Psoas muscle (tissue), 8 donors: ENCODE measurements at regions of chr11 and their contacts with region 1.

Region 1: DNA sequence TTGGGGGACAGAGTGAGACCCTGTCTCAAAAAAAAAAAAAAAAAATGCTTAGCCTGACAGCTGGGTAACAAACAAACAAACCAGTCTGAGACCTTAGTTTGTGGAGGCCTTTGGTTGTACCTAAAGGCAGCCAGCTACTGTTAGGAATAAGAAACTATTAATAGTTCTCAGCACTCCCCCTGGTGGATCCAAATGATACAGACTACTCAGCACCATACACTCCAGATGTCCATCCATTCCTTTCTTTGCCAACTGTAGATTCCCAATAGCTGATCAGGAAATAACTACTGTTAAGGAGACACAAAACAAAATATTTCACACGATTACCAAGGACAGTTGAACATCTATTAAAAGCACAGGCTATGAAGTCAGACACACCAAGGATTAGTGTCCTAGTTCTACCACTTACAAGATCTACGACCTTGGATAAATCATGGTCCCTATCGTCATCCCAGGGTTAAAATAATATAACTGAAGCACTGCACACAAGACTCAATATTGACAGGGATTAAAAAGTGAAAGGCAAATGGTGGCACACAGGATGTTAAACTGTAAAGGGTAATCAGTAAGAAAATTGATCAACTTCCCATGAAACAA is 17.2 kb downstream of the CLDN25 start:
- DNase-seq: no peak
- ATAC-seq: peak; percentile 87 to 97 (median 94)
- H3K4me3 ChIP-seq: no peak overlapping the region
- H3K27ac ChIP-seq: peak overlapping the region; percentile 65
- H3K4me1 ChIP-seq: no peaks in the 10 kb centered on the region
- H3K27me3 ChIP-seq: no peaks in the 10 kb centered on the region
- CTCF ChIP-seq: peak; percentile 74

Region 2: DNA sequence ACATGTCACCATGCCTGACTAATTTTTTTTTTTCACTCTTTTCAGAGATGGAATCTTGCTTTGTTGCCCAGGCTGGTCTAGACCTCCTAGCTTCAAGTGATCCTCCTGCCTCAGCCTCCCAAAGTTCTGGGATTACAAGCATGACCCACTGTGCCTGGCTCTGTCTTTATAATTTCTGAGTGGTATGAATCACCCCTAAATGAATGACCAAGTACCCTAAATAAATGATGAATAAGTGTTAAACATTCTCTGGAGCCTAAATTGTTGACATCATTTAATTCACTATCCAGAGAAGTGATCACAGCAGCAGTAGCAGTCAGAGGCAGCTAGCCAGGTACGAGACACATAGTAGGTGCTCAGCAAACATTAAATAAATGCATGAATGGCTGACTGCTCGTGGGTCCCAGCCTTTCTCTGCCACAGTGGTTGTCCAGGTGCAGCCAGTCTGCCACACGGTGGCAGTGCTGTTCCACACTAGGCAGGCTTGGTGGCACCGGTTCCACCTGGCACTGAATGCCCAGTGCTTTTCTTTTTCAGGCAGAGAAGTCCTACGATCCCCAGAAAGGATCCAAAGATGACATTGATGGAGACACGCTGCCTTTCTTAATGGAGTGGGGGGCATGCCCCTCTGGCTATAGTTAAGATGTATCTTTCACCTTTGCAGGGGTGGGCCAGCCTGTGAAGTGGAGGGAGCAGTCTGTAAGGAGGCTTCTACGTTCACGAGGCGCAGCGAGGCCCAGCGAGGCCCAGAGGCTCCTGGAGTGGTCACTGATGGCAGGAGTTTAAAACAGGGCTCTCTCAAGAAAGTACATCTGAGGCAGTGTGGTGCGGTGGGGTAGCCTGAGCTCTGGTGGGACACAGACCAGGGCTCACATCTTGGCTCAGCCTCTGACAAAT is 491.1 kb before region 1 on chr11:
- intact Hi-C with region 1: loop called (anchors 10 kb)
- DNase-seq: peak; percentile 76 to 87
- ATAC-seq: peak; percentile 92 to 99 (median 94)
- H3K4me3 ChIP-seq: no peak overlapping the region
- H3K27ac ChIP-seq: no peak overlapping the region
- H3K4me1 ChIP-seq: no peaks in the 10 kb centered on the region
- H3K27me3 ChIP-seq: no peaks in the 10 kb centered on the region
- CTCF ChIP-seq: peak; percentile 95

Region 3: GRCh38 chr11:113314389-113315301 is 482.1 kb before region 1 on chr11 and contains the start of gene TTC12:
- intact Hi-C with region 1: loop called (anchors 10 kb)
- DNase-seq: peak; percentile 94 to 98
- ATAC-seq: peak; percentile 100
- H3K4me3 ChIP-seq: peak within 1 kb of the TSS; percentile 91
- H3K27ac ChIP-seq: peak within 1 kb of the TSS; percentile 91
- H3K4me1 ChIP-seq: peaks cover 18% of the 10 kb centered on the region
- H3K27me3 ChIP-seq: no peaks in the 10 kb centered on the region
- CTCF ChIP-seq: no peak
- total RNA-seq, gene TTC12: 3.2 to 7.7 (median 6.0) TPM

Region 4: GRCh38 chr11:113519989-113520613 is 276.7 kb before region 1 on chr11:
- intact Hi-C with region 1: no loop called
- DNase-seq: no peak
- ATAC-seq: no peak
- H3K4me3 ChIP-seq: no peak overlapping the region
- H3K27ac ChIP-seq: no peak overlapping the region
- H3K4me1 ChIP-seq: no peaks in the 10 kb centered on the region
- H3K27me3 ChIP-seq: no peaks in the 10 kb centered on the region
- CTCF ChIP-seq: no peak

Region 5: GRCh38 chr11:113831314-113831713 is 34.6 kb after region 1 on chr11:
- intact Hi-C with region 1: loop called in 1 of 2 experiments (anchors 5 kb)
- DNase-seq: no peak
- ATAC-seq: no peak
- H3K4me3 ChIP-seq: no peak overlapping the region
- H3K27ac ChIP-seq: no peak overlapping the region
- H3K4me1 ChIP-seq: no peaks in the 10 kb centered on the region
- H3K27me3 ChIP-seq: no peaks in the 10 kb centered on the region
- CTCF ChIP-seq: no peak